CD14-positive monocyte (primary cell): ENCODE measurements at regions of chr11 and their contacts with region 1.

Region 1: GRCh38 chr11:58579192-58580129 is 598 bp downstream of the ZFP91 start:
- DNase-seq: peak; percentile 87 to 98 (median 91)
- H3K4me3 ChIP-seq: peak overlapping the region; percentile 68 to 89 (median 75)
- H3K4me3 Mint-ChIP-seq: peak overlapping the region; percentile 98 to 100
- H3K27ac ChIP-seq: peak overlapping the region; percentile 97 to 100
- H3K27ac Mint-ChIP-seq: peak overlapping the region; percentile 100
- H3K4me1 ChIP-seq: peaks cover 54 to 68% of the 10 kb centered on the region in 2 donors
- H3K4me1 Mint-ChIP-seq: peaks cover 62% of the 10 kb centered on the region
- H3K27me3 ChIP-seq: no peaks in the 10 kb centered on the region
- H3K27me3 Mint-ChIP-seq: peaks cover 0 to 2% (median 0%) of the 10 kb centered on the region in 3 donors
- CTCF ChIP-seq: peak; percentile 90

Region 2: GRCh38 chr11:57792060-57792541 is 787.4 kb before region 1 on chr11:
- intact Hi-C with region 1: loop called in 1 of 2 experiments (anchors 10 kb)
- DNase-seq: peak; percentile 98 to 99 (median 99)
- H3K4me3 ChIP-seq: peak overlapping the region; percentile 25 to 66 (median 26)
- H3K4me3 Mint-ChIP-seq: peak overlapping the region in 1 of 2 donors; percentile 89
- H3K27ac ChIP-seq: peak overlapping the region; percentile 87 to 94
- H3K27ac Mint-ChIP-seq: peak overlapping the region; percentile 97 to 99 (median 98)
- H3K4me1 ChIP-seq: peaks cover 53 to 71% of the 10 kb centered on the region in 2 donors
- H3K4me1 Mint-ChIP-seq: peaks cover 63% of the 10 kb centered on the region
- H3K27me3 ChIP-seq: no peaks in the 10 kb centered on the region
- H3K27me3 Mint-ChIP-seq: peaks cover 0 to 3% (median 3%) of the 10 kb centered on the region in 3 donors
- CTCF ChIP-seq: no peak

Region 3: DNA sequence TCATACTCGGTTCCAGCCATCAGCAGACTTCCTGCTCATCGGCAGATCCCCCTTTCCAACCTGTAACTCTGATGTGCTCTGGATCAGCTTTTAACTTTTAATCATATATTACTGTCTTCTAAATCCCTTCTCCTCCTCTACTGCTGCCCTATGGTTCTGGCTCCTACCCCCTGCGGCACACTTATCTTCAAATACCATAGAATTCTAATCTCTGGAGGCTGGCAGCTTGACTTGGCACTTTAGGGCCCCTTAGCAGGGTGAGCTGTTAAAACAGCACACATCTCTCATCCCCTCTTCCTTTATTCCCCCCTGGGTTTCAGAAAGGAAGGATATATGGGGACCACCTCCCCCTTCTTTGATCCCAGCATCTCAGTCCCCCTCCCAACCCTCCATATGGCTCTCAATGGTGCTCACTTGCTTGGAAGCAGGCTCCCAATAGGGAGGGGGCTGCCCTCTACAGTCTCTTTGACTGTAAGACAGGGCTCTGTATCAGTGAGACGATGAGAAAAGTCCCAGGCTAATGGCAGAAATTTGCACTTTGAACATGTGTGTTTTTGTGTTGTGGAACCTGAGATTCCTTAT is 38.6 kb after region 1 on chr11:
- intact Hi-C with region 1: no loop called
- DNase-seq: no peak
- H3K4me3 ChIP-seq: no peak overlapping the region
- H3K4me3 Mint-ChIP-seq: no peak overlapping the region
- H3K27ac ChIP-seq: no peak overlapping the region
- H3K27ac Mint-ChIP-seq: peak overlapping the region in 3 of 7 donors; percentile 4 to 62 (median 55)
- H3K4me1 ChIP-seq: no peaks in the 10 kb centered on the region
- H3K4me1 Mint-ChIP-seq: no peaks in the 10 kb centered on the region
- H3K27me3 ChIP-seq: no peaks in the 10 kb centered on the region
- H3K27me3 Mint-ChIP-seq: no peaks in the 10 kb centered on the region
- CTCF ChIP-seq: peak; percentile 8

Region 4: DNA sequence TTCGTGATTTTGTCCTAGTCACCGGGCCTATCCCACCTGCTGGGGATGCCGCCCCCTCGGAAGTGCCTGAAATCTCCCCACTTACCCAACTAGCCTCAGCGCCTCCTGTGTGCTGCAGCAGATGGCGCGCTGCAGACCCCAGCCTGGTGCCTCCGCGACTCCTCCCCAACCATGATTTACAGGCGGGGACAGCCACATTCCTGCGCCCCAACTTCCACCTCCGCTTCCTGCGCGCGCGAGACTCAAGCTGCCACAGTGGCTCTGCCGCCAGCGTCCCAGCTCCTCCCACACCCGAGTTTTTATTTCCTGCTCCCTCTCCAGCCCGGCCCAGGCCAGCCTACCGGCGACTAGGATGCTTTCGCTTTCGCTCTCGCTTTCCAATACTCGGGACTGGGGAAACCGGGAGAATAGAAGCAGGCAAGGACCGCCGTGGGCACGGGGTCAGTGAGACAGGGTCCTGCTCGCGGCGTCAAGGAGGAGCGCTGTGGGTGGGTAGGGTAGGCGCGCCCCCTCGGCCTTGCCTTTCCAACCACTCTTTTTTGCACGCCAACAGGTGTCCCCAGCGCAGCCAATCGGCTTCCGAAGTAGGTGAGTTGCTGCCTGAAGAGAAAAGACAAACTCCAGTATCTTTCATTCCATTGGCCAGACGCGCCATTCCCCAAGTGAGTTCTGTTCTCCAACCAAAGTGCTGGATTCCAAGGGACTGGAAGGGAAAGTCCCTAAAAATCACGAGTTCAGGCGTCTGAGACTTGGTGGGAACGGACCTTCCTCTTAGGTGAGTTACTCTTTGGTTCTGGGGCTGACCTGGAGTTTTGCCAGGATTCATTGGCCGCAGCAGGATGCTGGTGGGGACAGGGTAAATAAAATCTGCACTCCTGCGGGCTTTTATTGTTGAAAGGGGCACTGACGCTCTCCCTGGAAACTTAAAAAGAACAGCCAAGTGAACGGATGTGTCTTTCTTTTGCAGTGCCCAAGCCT is 563.4 kb after region 1 on chr11 and contains the start of gene FAM111A:
- intact Hi-C with region 1: loop called in 1 of 2 experiments (anchors 10 kb)
- DNase-seq: peak; percentile 82 to 88 (median 87)
- H3K4me3 ChIP-seq: peak within 1 kb of the TSS; percentile 80 to 99 (median 83)
- H3K4me3 Mint-ChIP-seq: peak within 1 kb of the TSS; percentile 97 to 100
- H3K27ac ChIP-seq: peak within 1 kb of the TSS; percentile 93 to 99
- H3K27ac Mint-ChIP-seq: peak within 1 kb of the TSS; percentile 95 to 98 (median 97)
- H3K4me1 ChIP-seq: peaks cover 43 to 56% of the 10 kb centered on the region in 2 donors
- H3K4me1 Mint-ChIP-seq: peaks cover 57% of the 10 kb centered on the region
- H3K27me3 ChIP-seq: no peaks in the 10 kb centered on the region
- H3K27me3 Mint-ChIP-seq: no peaks in the 10 kb centered on the region
- CTCF ChIP-seq: no peak
- polyA plus RNA-seq, gene FAM111A: 34.6 to 101 (median 55.7) TPM

Region 5: GRCh38 chr11:59615637-59616395 is 1036.4 kb after region 1 on chr11 and contains the start of gene OSBP:
- intact Hi-C with region 1: loop called in 1 of 2 experiments (anchors 5 kb)
- DNase-seq: peak; percentile 100
- H3K4me3 ChIP-seq: peak within 1 kb of the TSS; percentile 81 to 93 (median 90)
- H3K4me3 Mint-ChIP-seq: peak within 1 kb of the TSS; percentile 88 to 98
- H3K27ac ChIP-seq: peak within 1 kb of the TSS; percentile 96 to 97
- H3K27ac Mint-ChIP-seq: peak within 1 kb of the TSS; percentile 96 to 100 (median 99)
- H3K4me1 ChIP-seq: peaks cover 22 to 34% of the 10 kb centered on the region in 2 donors
- H3K4me1 Mint-ChIP-seq: peaks cover 36% of the 10 kb centered on the region
- H3K27me3 ChIP-seq: no peaks in the 10 kb centered on the region
- H3K27me3 Mint-ChIP-seq: peaks cover 0 to 3% (median 0%) of the 10 kb centered on the region in 3 donors
- CTCF ChIP-seq: no peak
- polyA plus RNA-seq, gene OSBP: 9.8 to 15.3 (median 11.9) TPM